ENCODE measurements at regions of chr12 and their contacts with region 1.

Region 1: DNA sequence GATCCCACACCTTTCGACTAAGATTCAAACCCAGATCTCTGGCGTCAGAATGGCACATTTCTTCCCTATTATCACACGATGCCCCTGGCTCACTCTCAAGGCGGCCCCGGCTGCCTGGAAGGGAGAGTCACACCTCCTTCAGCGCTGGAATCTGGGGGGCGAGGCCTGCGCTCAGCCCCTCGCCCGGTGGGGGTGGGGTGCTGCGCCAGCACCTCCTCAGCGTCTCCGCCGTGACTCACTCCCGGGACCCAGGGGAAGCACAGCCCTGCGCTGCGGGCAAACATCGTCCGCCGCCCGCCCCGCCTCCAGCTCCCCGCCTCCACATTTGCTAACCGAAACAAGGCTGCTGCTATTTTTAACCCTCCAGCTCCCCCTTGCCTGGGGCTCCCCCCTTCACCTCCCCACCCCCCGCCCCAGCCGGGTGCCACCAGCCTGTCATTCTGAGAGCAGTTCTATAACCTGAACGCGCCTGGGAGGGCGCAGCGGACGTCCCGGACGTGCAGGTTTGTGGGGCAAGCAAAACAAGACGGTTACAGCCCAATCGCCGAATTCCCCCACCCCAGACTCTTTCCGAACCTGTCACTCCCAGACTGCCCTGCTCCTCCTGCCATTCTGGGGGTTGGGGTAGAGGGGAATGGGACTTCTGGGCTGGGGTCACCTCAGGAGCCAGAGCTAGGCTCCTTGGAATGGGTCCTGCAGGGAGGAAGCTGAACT is 6.7 kb downstream of the HDAC7 start:
- DNase-seq: peak; percentile 98
- ATAC-seq: peak; percentile 59
- H3K4me3 Mint-ChIP-seq: peak overlapping the region; percentile 94
- H3K27ac Mint-ChIP-seq: peak overlapping the region; percentile 98
- H3K4me1 Mint-ChIP-seq: peaks cover 81% of the 10 kb centered on the region
- H3K27me3 Mint-ChIP-seq: no peaks in the 10 kb centered on the region

Region 2: GRCh38 chr12:46217541-46218321 is 1595.2 kb before region 1 on chr12:
- CTCF ChIA-PET with region 1: no interaction called
- POLR2A ChIA-PET with region 1: no interaction called
- intact Hi-C with region 1: loop called in 1 of 2 experiments (anchors 2 kb)
- DNase-seq: peak; percentile 73
- ATAC-seq: no peak
- H3K4me3 Mint-ChIP-seq: peak overlapping the region; percentile 37
- H3K27ac Mint-ChIP-seq: peak overlapping the region; percentile 88
- H3K4me1 Mint-ChIP-seq: peaks cover 95% of the 10 kb centered on the region
- H3K27me3 Mint-ChIP-seq: no peaks in the 10 kb centered on the region

Region 3: GRCh38 chr12:47216150-47216677 is 596.7 kb before region 1 on chr12:
- CTCF ChIA-PET with region 1: interaction called, 4 read pairs
- POLR2A ChIA-PET with region 1: no interaction called
- intact Hi-C with region 1: loop called (anchors 5 kb)
- DNase-seq: peak; percentile 81
- ATAC-seq: peak; percentile 43
- H3K4me3 Mint-ChIP-seq: peak overlapping the region; percentile 89
- H3K27ac Mint-ChIP-seq: peak overlapping the region; percentile 96
- H3K4me1 Mint-ChIP-seq: peaks cover 38% of the 10 kb centered on the region
- H3K27me3 Mint-ChIP-seq: no peaks in the 10 kb centered on the region

Region 4: DNA sequence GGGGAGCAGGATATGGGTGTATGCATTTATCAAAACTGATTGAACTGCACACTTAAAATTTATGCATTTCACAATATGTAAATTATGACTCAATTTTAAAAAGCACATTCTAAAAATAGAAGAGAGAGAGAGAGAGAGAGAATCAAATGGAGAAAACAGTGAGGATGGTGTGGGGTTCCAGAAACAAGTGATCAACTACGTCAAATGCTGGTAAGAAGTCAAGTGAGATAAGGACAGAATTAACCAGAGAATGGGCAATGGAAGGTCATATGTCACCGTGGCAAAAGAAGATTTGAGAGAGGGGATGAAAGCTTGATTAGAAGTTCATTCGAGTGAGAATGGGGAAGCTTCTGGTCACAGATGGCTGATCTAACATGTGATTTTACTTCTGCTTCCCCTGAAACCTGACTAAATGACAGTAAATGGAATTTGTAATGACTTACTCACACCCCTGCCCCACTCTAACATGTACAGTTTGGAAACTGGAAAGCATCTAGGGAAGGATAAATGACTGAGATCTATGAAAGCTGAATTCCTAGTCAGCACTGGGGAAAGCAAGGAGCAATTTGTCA is 456.7 kb before region 1 on chr12:
- CTCF ChIA-PET with region 1: no interaction called
- POLR2A ChIA-PET with region 1: no interaction called
- intact Hi-C with region 1: loop called in 1 of 2 experiments (anchors 2 kb)
- DNase-seq: peak; percentile 61
- ATAC-seq: peak; percentile 74
- H3K4me3 Mint-ChIP-seq: peak overlapping the region; percentile 58
- H3K27ac Mint-ChIP-seq: peak overlapping the region; percentile 100
- H3K4me1 Mint-ChIP-seq: peaks cover 86% of the 10 kb centered on the region
- H3K27me3 Mint-ChIP-seq: no peaks in the 10 kb centered on the region

Region 5: DNA sequence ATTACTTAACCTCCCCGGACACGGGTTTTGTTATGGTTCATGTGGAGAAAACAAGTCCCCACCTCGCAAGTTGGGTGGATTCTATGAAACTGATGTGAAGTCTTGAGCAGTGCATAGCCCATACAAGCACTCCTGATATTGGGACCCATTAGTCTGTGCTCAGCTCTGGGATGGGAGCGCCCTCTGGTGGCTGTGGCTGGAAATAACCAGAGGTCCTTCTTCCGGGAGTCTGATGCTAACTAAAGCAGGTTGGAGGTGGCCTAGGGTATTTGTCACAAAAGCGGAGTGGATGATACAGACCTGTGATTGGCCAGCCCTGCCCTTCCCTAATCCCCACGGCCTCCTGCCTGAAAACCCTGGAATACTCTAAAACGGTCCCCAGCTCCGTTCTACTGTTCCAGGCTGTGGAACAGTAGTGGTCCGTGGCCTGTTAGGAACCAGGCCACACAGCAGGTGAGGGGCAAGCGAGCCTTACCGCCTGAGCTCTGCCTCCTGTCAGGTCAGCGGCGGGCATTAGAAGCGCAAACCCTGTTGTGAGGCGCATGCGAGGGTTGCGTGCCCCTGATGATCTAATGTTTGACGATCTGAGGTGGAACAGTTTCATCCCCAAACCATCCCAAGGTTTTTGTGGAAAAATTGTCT is 33.5 kb before region 1 on chr12:
- CTCF ChIA-PET with region 1: interaction called, 10 read pairs
- POLR2A ChIA-PET with region 1: interaction called, 3 read pairs
- intact Hi-C with region 1: no loop called
- DNase-seq: peak; percentile 96
- ATAC-seq: peak; percentile 82
- H3K4me3 Mint-ChIP-seq: no peak overlapping the region
- H3K27ac Mint-ChIP-seq: peak overlapping the region; percentile 37
- H3K4me1 Mint-ChIP-seq: peaks cover 29% of the 10 kb centered on the region
- H3K27me3 Mint-ChIP-seq: no peaks in the 10 kb centered on the region

Region 6: GRCh38 chr12:47882781-47883546 is 70.0 kb after region 1 on chr12:
- CTCF ChIA-PET with region 1: interaction called, 4 read pairs
- POLR2A ChIA-PET with region 1: interaction called, 13 read pairs
- intact Hi-C with region 1: loop called (anchors 1 to 2 kb)
- DNase-seq: peak; percentile 70
- ATAC-seq: peak; percentile 14
- H3K4me3 Mint-ChIP-seq: peak overlapping the region; percentile 78
- H3K27ac Mint-ChIP-seq: peak overlapping the region; percentile 97
- H3K4me1 Mint-ChIP-seq: peaks cover 81% of the 10 kb centered on the region
- H3K27me3 Mint-ChIP-seq: no peaks in the 10 kb centered on the region

Region 7: DNA sequence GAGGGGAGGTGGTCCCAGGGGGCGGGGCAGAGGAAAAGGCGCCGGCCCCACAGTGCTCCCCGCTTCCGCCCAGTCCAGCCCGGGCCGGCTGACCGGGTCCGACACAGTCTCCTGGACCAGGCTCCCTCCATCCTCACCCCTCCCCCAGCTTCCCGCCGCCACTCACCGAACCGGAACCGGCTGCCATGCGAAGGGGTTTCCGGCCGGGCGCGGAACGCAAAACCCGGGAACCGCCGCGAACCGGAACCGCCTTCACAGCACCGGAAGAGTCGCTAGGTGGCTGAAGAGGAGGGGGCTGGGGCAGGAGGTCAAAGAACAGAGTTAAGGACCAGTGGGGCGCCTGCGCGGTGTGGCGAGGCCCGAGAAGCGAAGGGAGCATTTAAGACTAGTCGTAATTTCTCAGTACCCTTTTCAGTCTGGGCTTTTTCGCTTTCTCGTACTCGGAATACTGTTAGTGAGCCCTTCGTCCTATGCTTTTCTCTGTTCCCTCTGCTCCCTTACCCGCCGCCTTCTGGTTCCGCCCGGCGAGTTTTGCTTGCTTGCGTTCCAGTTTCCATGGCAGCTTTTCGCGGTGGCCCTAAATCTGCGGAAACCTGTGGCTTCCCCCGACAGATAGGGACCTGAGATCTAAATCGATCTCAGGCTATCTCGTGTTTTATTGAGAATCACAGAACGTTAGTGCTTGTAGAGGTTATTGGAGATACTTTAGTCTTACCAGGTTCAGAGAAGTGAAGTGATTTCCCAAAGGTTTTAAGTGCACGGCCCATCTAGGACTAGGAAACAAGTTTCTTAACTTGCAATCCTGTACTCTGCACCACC is 293.1 kb after region 1 on chr12 and contains the start of gene SENP1:
- CTCF ChIA-PET with region 1: no interaction called
- POLR2A ChIA-PET with region 1: no interaction called
- intact Hi-C with region 1: loop called in 1 of 2 experiments (anchors 2 kb)
- DNase-seq: peak; percentile 94
- ATAC-seq: peak; percentile 87
- H3K4me3 Mint-ChIP-seq: peak within 1 kb of the TSS; percentile 95
- H3K27ac Mint-ChIP-seq: peak within 1 kb of the TSS; percentile 98
- H3K4me1 Mint-ChIP-seq: peaks cover 46% of the 10 kb centered on the region
- H3K27me3 Mint-ChIP-seq: no peaks in the 10 kb centered on the region
- total RNA-seq, gene SENP1: 44.4 to 61.8 TPM

Measured in activated CD4-positive, alpha-beta T cell treated with anti-CD3 and anti-CD28 coated beads for 36 hours (primary cell).